ENCODE measurements at regions of chr4 and their contacts with region 1.

Region 1: GRCh38 chr4:24642981-24643547 is 58.7 kb upstream of the DHX15 start:
- DNase-seq: peak; percentile 69 to 76
- H3K4me3 ChIP-seq: no peak overlapping the region
- H3K4me3 Mint-ChIP-seq: peak overlapping the region; percentile 39
- H3K27ac Mint-ChIP-seq: peak overlapping the region; percentile 69
- H3K4me1 ChIP-seq: peaks cover 24% of the 10 kb centered on the region
- H3K4me1 Mint-ChIP-seq: peaks cover 16% of the 10 kb centered on the region
- H3K27me3 ChIP-seq: no peaks in the 10 kb centered on the region
- H3K27me3 Mint-ChIP-seq: no peaks in the 10 kb centered on the region
- CTCF ChIP-seq: no peak

Region 2: GRCh38 chr4:24551492-24552289 is 91.4 kb before region 1 on chr4:
- CTCF ChIA-PET with region 1: no interaction called
- POLR2A ChIA-PET with region 1: no interaction called
- intact Hi-C with region 1: no loop called
- DNase-seq: no peak
- H3K4me3 ChIP-seq: no peak overlapping the region
- H3K4me3 Mint-ChIP-seq: no peak overlapping the region
- H3K27ac Mint-ChIP-seq: no peak overlapping the region
- H3K4me1 ChIP-seq: peaks cover 3% of the 10 kb centered on the region
- H3K4me1 Mint-ChIP-seq: peaks cover 15% of the 10 kb centered on the region
- H3K27me3 ChIP-seq: no peaks in the 10 kb centered on the region
- H3K27me3 Mint-ChIP-seq: no peaks in the 10 kb centered on the region
- CTCF ChIP-seq: peak; percentile 17 to 35

Region 3: GRCh38 chr4:24657768-24658617 is 14.9 kb after region 1 on chr4:
- CTCF ChIA-PET with region 1: no interaction called
- POLR2A ChIA-PET with region 1: no interaction called
- intact Hi-C with region 1: loop called (anchors 1 kb)
- DNase-seq: peak; percentile 15 to 40
- H3K4me3 ChIP-seq: no peak overlapping the region
- H3K4me3 Mint-ChIP-seq: no peak overlapping the region
- H3K27ac Mint-ChIP-seq: peak overlapping the region; percentile 40
- H3K4me1 ChIP-seq: peaks cover 36% of the 10 kb centered on the region
- H3K4me1 Mint-ChIP-seq: peaks cover 40% of the 10 kb centered on the region
- H3K27me3 ChIP-seq: no peaks in the 10 kb centered on the region
- H3K27me3 Mint-ChIP-seq: no peaks in the 10 kb centered on the region
- CTCF ChIP-seq: no peak

Region 4: GRCh38 chr4:24764345-24764744 is 121.3 kb after region 1 on chr4:
- CTCF ChIA-PET with region 1: no interaction called
- POLR2A ChIA-PET with region 1: no interaction called
- intact Hi-C with region 1: loop called (anchors 1 kb)
- DNase-seq: no peak
- H3K4me3 ChIP-seq: no peak overlapping the region
- H3K4me3 Mint-ChIP-seq: no peak overlapping the region
- H3K27ac Mint-ChIP-seq: peak overlapping the region; percentile 53
- H3K4me1 ChIP-seq: peaks cover 9% of the 10 kb centered on the region
- H3K4me1 Mint-ChIP-seq: peaks cover 8% of the 10 kb centered on the region
- H3K27me3 ChIP-seq: no peaks in the 10 kb centered on the region
- H3K27me3 Mint-ChIP-seq: no peaks in the 10 kb centered on the region
- CTCF ChIP-seq: no peak

Region 5: DNA sequence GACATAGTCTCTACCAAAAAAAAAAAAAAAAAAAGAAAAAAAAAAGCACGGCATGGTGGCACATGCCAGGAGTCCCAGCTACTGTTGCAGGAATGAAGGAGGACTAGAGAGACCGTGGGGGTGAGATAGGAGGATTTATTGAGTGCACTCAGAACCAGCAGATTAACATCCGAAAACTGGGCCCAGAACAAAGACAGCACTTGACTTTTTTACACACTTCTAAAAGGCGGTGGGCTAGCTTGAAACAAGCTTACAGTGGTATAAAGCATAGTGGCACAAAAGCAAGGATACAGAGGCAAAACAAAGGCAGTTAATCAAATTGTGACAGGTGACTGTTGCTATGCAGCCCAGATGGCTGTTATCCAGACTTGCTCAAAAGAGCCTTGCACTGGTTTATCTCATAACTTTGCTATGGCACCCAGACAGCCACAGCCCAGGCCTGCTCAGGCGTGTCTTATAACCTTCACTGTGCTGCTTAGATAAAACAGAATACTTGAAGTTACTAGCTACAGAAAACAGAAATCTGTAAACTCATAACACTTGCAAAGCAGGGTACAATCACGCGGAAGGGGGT is 580.8 kb after region 1 on chr4:
- CTCF ChIA-PET with region 1: no interaction called
- POLR2A ChIA-PET with region 1: no interaction called
- intact Hi-C with region 1: no loop called
- DNase-seq: peak; percentile 52 to 70
- H3K4me3 ChIP-seq: no peak overlapping the region
- H3K4me3 Mint-ChIP-seq: no peak overlapping the region
- H3K27ac Mint-ChIP-seq: no peak overlapping the region
- H3K4me1 ChIP-seq: no peaks in the 10 kb centered on the region
- H3K4me1 Mint-ChIP-seq: no peaks in the 10 kb centered on the region
- H3K27me3 ChIP-seq: no peaks in the 10 kb centered on the region
- H3K27me3 Mint-ChIP-seq: no peaks in the 10 kb centered on the region
- CTCF ChIP-seq: no peak

Measured in Caco-2 (cell line).